Endothelial cell of umbilical vein (primary cell): ENCODE measurements at regions of chrX and their contacts with region 1.

Region 1: DNA sequence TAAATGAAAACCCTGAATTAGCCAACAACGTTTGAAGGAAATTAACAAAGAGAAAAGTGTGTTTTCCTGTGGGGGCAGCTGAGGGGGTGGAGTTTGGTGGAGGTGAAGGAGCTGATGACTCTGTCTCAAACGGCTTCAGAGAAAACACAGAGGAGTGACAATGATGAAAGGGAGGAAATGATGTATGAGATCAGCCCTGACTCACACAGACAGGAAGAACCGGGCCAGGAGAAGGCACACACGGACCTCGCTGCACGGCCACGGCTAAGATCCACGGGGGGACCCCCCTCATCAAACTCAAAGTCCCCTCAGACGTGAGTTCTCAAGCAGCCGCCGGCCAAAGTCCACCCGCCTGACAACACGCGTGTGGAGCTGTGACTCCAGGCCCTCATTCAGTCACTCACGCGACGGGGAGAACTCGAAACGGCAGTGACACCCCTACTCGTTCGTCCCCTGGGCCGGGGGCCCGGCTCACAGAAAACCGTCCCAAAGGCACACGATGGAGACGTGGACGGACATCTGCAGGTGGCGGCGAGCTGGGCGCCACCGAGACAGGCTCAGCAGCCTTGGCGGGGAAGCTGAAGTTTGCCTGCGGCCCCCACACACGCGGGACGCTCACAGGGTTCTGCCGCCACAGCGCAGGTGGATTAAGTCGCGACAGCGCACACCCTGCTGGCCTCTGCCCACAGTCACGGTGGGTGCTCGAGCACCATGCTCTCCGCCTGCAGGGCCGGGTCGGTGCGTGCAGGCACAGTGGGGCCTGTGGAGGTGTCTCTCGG is 28.8 kb downstream of the PPP2R3B start:
- DNase-seq: peak; percentile 79
- H3K4me3 ChIP-seq: no peak overlapping the region
- H3K27ac ChIP-seq: peak overlapping the region; percentile 66
- H3K4me1 ChIP-seq: peaks cover 11% of the 10 kb centered on the region
- H3K27me3 ChIP-seq: no peaks in the 10 kb centered on the region
- CTCF ChIP-seq: no peak
- POLR2A ChIP-seq: no peak

Region 2: GRCh38 chrX:283115-283845 is 74.6 kb before region 1 on chrX:
- CTCF ChIA-PET with region 1: no interaction called
- POLR2A ChIA-PET with region 1: no interaction called
- dilution Hi-C with region 1: no loop called
- intact Hi-C with region 1: loop called (anchors 2 kb)
- DNase-seq: peak; percentile 89
- H3K4me3 ChIP-seq: peak overlapping the region; percentile 43 to 82 (median 79)
- H3K27ac ChIP-seq: peak overlapping the region; percentile 60
- H3K4me1 ChIP-seq: no peaks in the 10 kb centered on the region
- H3K27me3 ChIP-seq: no peaks in the 10 kb centered on the region
- CTCF ChIP-seq: no peak
- POLR2A ChIP-seq: peak; percentile 48

Region 3: GRCh38 chrX:318739-319578 is 38.9 kb before region 1 on chrX and contains the start of gene GTPBP6:
- CTCF ChIA-PET with region 1: no interaction called
- POLR2A ChIA-PET with region 1: no interaction called
- dilution Hi-C with region 1: no loop called
- intact Hi-C with region 1: loop called (anchors 1 kb)
- DNase-seq: peak; percentile 100
- H3K4me3 ChIP-seq: peak within 1 kb of the TSS; percentile 66 to 89 (median 84)
- H3K27ac ChIP-seq: peak within 1 kb of the TSS; percentile 84
- H3K4me1 ChIP-seq: peaks cover 5% of the 10 kb centered on the region
- H3K27me3 ChIP-seq: no peaks in the 10 kb centered on the region
- CTCF ChIP-seq: peak in 1 of 2 donors; percentile 20
- POLR2A ChIP-seq: peak; percentile 78
- total RNA-seq, gene GTPBP6: 62.1 and 63.5 TPM in 2 replicates

Region 4: GRCh38 chrX:346034-346813 is 11.7 kb before region 1 on chrX:
- CTCF ChIA-PET with region 1: no interaction called
- POLR2A ChIA-PET with region 1: no interaction called
- dilution Hi-C with region 1: no loop called
- intact Hi-C with region 1: no loop called
- DNase-seq: no peak
- H3K4me3 ChIP-seq: no peak overlapping the region
- H3K27ac ChIP-seq: no peak overlapping the region
- H3K4me1 ChIP-seq: peaks cover 9% of the 10 kb centered on the region
- H3K27me3 ChIP-seq: no peaks in the 10 kb centered on the region
- CTCF ChIP-seq: no peak
- POLR2A ChIP-seq: no peak

Region 5: DNA sequence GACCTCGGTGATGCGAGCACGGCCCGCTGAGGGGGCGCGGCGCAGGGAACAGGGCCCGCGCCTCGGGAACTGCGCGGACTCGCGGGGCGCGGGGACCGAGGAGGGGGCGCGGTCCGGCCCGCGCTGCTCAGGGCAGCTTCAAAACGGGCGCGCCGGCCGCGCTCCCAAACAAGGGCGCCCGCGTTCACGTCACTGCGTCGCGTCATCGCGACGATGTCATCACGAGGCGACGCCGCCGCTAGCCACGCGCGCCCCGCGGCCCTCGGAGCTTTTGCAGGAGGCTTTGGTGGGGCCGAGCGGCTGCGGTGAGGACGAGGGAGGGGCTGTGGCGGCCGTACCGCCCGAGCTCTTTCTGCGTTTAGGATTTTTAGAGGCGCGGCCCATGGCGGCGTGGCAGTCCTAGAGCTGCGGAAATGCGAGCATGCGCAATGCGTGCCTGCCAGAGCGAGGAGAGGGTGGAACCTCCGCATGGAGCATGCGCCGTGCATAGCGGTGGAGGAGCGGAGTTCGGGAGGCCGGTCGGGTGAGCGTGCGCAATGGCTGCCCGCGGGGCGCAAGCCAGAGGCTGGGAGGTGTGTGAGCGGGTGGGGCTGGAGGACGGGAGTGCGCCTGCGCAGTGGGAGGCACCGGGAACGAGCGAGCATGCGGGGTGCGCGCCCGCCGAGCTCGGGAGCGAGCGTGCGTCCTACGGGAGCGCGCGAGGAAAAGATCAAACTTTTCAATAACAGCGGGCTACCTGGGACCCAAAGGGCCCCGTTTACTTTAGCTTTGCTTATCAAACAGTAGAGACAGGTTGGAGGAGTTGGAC is 29.1 kb after region 1 on chrX and contains the start of gene PPP2R3B:
- CTCF ChIA-PET with region 1: no interaction called
- POLR2A ChIA-PET with region 1: no interaction called
- dilution Hi-C with region 1: no loop called
- intact Hi-C with region 1: loop called (anchors 2 kb)
- DNase-seq: peak; percentile 99
- H3K4me3 ChIP-seq: peak within 1 kb of the TSS; percentile 74 to 99 (median 79)
- H3K27ac ChIP-seq: peak within 1 kb of the TSS; percentile 98
- H3K4me1 ChIP-seq: no peaks in the 10 kb centered on the region
- H3K27me3 ChIP-seq: no peaks in the 10 kb centered on the region
- CTCF ChIP-seq: no peak
- POLR2A ChIP-seq: peak; percentile 77
- total RNA-seq, gene PPP2R3B: 29.2 and 33.6 TPM in 2 replicates